ENCODE measurements at regions of chr13 and their contacts with region 1.

Region 1: DNA sequence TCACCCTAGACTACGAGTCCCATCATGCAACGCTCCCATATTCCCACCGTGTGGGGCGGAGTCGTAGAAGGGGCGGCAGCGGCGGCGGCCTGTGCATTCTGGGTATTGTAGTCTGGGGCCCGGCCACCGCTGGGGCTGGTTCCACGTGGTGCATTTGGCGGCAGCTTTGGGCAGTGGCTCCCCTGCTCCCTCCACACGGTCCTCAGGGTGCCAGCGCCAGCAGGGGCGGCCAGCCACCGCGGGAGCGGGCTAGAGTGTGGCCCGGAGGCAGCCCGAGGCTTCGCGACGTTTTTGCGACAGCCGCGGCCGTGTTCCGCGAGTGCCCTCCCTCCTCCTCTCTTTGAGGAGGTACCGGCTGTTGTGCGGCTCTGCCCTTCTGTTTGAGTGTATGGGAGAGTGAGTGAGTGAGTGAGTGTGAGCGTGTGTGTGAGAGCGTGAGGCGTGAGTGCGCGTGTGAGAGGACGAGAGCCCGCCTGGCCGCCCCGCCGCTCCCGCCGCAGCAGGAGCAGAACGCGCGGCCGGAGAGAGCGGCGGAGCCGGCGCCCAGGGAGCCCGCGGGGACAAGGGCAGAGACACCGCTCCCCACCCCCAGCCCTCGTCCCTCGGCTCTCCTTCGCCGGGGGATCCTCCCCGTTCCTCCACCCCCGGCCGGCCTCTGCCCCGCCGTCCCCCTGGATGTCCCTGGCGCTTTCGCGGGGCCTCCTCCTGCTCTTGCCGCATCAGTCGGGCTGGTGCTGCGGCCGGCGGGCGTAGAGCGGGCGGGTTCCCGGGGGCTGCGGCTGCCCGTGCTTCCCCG is at the start of gene CDK8:
- DNase-seq: peak; percentile 83 to 95 (median 93)
- ATAC-seq: peak; percentile 92
- H3K4me3 ChIP-seq: peak within 1 kb of the TSS; percentile 95
- H3K4me3 Mint-ChIP-seq: peak within 1 kb of the TSS; percentile 83 to 98 (median 94)
- H3K27ac ChIP-seq: peak within 1 kb of the TSS; percentile 85
- H3K27ac Mint-ChIP-seq: peak within 1 kb of the TSS; percentile 82 to 93 (median 90)
- H3K4me1 ChIP-seq: peaks cover 17% of the 10 kb centered on the region in 2 donors
- H3K4me1 Mint-ChIP-seq: peaks cover 25 to 50% (median 41%) of the 10 kb centered on the region in 7 donors
- H3K27me3 ChIP-seq: no peaks in the 10 kb centered on the region
- H3K27me3 Mint-ChIP-seq: peaks cover 0 to 2% (median 0%) of the 10 kb centered on the region in 5 donors
- total RNA-seq, gene CDK8: 9.0 to 14.0 (median 11.6) TPM

Region 2: GRCh38 chr13:24512197-24512907 is 1741.6 kb before region 1 on chr13 and contains the start of gene PARP4:
- CTCF ChIA-PET with region 1: no interaction called
- POLR2A ChIA-PET with region 1: no interaction called
- intact Hi-C with region 1: loop called in 1 of 2 experiments (anchors 10 kb)
- DNase-seq: peak; percentile 49 to 74 (median 68)
- ATAC-seq: peak; percentile 85
- H3K4me3 ChIP-seq: peak within 1 kb of the TSS; percentile 95
- H3K4me3 Mint-ChIP-seq: peak within 1 kb of the TSS; percentile 88 to 96 (median 92)
- H3K27ac ChIP-seq: peak within 1 kb of the TSS; percentile 67
- H3K27ac Mint-ChIP-seq: peak within 1 kb of the TSS; percentile 68 to 93 (median 88)
- H3K4me1 ChIP-seq: peaks cover 3 to 7% of the 10 kb centered on the region in 2 donors
- H3K4me1 Mint-ChIP-seq: peaks cover 22 to 51% (median 41%) of the 10 kb centered on the region in 7 donors
- H3K27me3 ChIP-seq: no peaks in the 10 kb centered on the region
- H3K27me3 Mint-ChIP-seq: peaks cover 0 to 4% (median 0%) of the 10 kb centered on the region in 5 donors
- total RNA-seq, gene PARP4: 33.4 to 71.1 (median 65.4) TPM

Region 3: DNA sequence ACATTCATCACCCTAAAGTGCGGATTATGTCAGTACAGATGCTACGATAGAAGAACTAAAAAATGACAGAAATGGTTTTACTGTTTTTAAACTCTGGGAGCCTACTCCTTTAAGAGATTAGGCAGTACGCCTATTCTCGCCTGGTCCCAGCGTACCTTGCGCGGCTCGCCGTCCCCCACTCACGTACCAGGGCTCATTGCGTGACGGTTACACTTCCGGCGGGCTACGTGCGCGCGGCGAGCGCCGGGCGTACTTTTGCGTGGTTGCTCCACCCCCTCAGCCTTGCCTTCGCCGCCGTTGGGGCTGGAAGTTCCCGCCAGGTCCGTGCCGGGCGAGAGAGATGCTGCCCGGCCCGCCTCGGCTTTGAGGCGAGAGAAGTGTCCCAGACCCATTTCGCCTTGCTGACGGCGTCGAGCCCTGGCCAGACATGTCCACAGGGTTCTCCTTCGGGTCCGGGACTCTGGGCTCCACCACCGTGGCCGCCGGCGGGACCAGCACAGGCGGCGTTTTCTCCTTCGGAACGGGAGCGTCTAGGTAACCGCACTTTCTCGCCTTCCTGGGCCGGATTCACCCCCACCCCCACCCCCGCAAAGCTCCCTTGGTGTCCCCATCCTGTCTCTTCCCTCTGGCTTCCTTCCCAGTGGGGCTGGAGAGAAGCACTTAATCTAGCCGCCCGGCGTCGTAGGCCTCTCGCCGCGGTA is 952.5 kb before region 1 on chr13 and contains the start of gene NUP58:
- CTCF ChIA-PET with region 1: no interaction called
- POLR2A ChIA-PET with region 1: no interaction called
- intact Hi-C with region 1: loop called (anchors 1 to 10 kb)
- DNase-seq: peak; percentile 83 to 94 (median 92)
- ATAC-seq: peak; percentile 99
- H3K4me3 ChIP-seq: peak within 1 kb of the TSS; percentile 64
- H3K4me3 Mint-ChIP-seq: peak within 1 kb of the TSS; percentile 86 to 95 (median 92)
- H3K27ac ChIP-seq: peak within 1 kb of the TSS; percentile 93
- H3K27ac Mint-ChIP-seq: peak within 1 kb of the TSS; percentile 87 to 97 (median 93)
- H3K4me1 ChIP-seq: peaks cover 13 to 22% of the 10 kb centered on the region in 2 donors
- H3K4me1 Mint-ChIP-seq: peaks cover 21 to 51% (median 47%) of the 10 kb centered on the region in 7 donors
- H3K27me3 ChIP-seq: peaks cover 0 to 5% of the 10 kb centered on the region in 2 donors
- H3K27me3 Mint-ChIP-seq: peaks cover 7 to 19% (median 10%) of the 10 kb centered on the region in 5 donors
- total RNA-seq, gene NUP58: 41.1 to 89.1 (median 57.0) TPM

Region 4: GRCh38 chr13:26482451-26483197 is 228.6 kb after region 1 on chr13:
- CTCF ChIA-PET with region 1: no interaction called
- POLR2A ChIA-PET with region 1: no interaction called
- intact Hi-C with region 1: loop called in 1 of 2 experiments (anchors 1 kb)
- DNase-seq: peak; percentile 27 to 82 (median 69)
- ATAC-seq: peak; percentile 92
- H3K4me3 ChIP-seq: peak overlapping the region; percentile 31
- H3K4me3 Mint-ChIP-seq: peak overlapping the region in 7 of 10 donors; percentile 46 to 60 (median 56)
- H3K27ac ChIP-seq: no peak overlapping the region
- H3K27ac Mint-ChIP-seq: peak overlapping the region; percentile 56 to 90 (median 83)
- H3K4me1 ChIP-seq: peaks cover 15 to 22% of the 10 kb centered on the region in 2 donors
- H3K4me1 Mint-ChIP-seq: peaks cover 4 to 27% (median 20%) of the 10 kb centered on the region in 7 donors
- H3K27me3 ChIP-seq: no peaks in the 10 kb centered on the region
- H3K27me3 Mint-ChIP-seq: no peaks in the 10 kb centered on the region

Region 5: GRCh38 chr13:26698392-26699196 is 444.6 kb after region 1 on chr13:
- CTCF ChIA-PET with region 1: no interaction called
- POLR2A ChIA-PET with region 1: no interaction called
- intact Hi-C with region 1: loop called in 1 of 2 experiments (anchors 1 kb)
- DNase-seq: peak; percentile 52 to 81 (median 79)
- ATAC-seq: peak; percentile 89
- H3K4me3 ChIP-seq: no peak overlapping the region
- H3K4me3 Mint-ChIP-seq: peak overlapping the region in 5 of 10 donors; percentile 28 to 45 (median 39)
- H3K27ac ChIP-seq: no peak overlapping the region
- H3K27ac Mint-ChIP-seq: no peak overlapping the region
- H3K4me1 ChIP-seq: no peaks in the 10 kb centered on the region
- H3K4me1 Mint-ChIP-seq: peaks cover 0 to 10% (median 5%) of the 10 kb centered on the region in 7 donors
- H3K27me3 ChIP-seq: no peaks in the 10 kb centered on the region
- H3K27me3 Mint-ChIP-seq: peaks cover 0 to 23% (median 3%) of the 10 kb centered on the region in 5 donors